Activated T-helper 1 cell treated with anti-CD3 and anti-CD28 coated beads, Interleukin-12 subunit alpha, Interleukin-12 subunit beta, Interleukin-2, Interleukin-4 antibody, amounts not matched to agents 30 ng/mL and 10 ng/mL and 1 ng/mL, durations not matched to agents 14 hours and 24 hours and 36 hours (primary cell): ENCODE measurements at regions of chr17 and their contacts with region 1.

Region 1: DNA sequence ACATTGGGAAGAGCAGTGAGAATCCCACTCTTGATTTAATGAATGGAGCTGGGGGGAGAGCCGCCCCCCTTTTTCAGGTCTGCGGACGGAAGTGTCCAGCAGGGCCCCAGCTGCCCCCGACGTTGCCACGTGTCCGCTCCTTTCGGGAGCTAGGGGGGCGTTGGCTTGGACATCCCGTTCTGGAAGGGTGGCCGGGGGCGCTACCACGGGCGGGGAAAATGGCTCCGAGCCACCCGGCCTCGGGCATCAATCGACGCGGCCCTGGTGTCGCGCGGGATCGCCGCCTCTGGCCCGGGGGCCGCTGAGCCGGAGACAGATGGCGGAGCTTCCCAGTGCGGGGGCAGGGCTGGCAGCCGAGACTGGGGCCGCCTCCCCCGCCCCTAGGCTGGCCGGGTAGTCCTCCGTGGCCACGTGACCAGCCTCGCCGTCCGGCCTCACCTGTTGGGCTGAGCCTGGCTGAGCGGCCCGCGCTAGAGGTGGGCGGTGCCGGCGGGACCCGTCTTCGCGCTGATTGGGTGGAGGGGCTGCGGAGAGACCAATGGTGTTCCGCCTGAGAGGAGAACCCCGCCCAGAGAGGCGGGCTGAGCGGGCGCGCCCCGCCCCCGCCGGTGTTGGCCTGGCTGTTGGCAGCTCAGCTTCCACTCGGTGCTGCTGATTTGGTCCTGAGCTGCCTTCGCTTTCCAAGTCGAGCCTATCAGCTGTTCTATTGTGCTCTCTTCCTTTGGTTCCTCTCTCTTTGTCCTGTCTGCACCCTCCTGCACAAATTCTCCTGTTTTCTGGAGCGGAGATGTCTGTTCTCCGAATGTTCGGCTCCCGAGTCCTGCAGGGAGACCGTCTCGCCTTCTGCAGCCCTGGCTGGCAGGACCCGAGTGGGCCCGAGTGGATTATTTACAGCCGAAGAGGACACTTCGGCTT is 8.3 kb downstream of the HS3ST3B1 start:
- DNase-seq: peak; percentile 87
- H3K4me3 Mint-ChIP-seq: peak overlapping the region; percentile 80
- H3K27ac Mint-ChIP-seq: peak overlapping the region; percentile 70
- H3K4me1 Mint-ChIP-seq: peaks cover 66% of the 10 kb centered on the region
- H3K27me3 Mint-ChIP-seq: peaks cover 1% of the 10 kb centered on the region

Region 2: GRCh38 chr17:13017659-13018459 is 1291.4 kb before region 1 on chr17 and contains the start of gene ELAC2:
- intact Hi-C with region 1: loop called (anchors 2 kb)
- DNase-seq: peak; percentile 97
- H3K4me3 Mint-ChIP-seq: peak within 1 kb of the TSS; percentile 96
- H3K27ac Mint-ChIP-seq: peak within 1 kb of the TSS; percentile 96
- H3K4me1 Mint-ChIP-seq: peaks cover 42% of the 10 kb centered on the region
- H3K27me3 Mint-ChIP-seq: no peaks in the 10 kb centered on the region
- total RNA-seq, gene ELAC2: 96.9 and 98.7 TPM in 2 replicates

Region 3: GRCh38 chr17:14409292-14409691 is 100.1 kb after region 1 on chr17:
- intact Hi-C with region 1: loop called (anchors 1 kb)
- DNase-seq: no peak
- H3K4me3 Mint-ChIP-seq: no peak overlapping the region
- H3K27ac Mint-ChIP-seq: no peak overlapping the region
- H3K4me1 Mint-ChIP-seq: peaks cover 12% of the 10 kb centered on the region
- H3K27me3 Mint-ChIP-seq: peaks cover 3% of the 10 kb centered on the region